Testis (tissue), 5 donors: ENCODE measurements at regions of chr9 and their contacts with region 1.

Region 1: DNA sequence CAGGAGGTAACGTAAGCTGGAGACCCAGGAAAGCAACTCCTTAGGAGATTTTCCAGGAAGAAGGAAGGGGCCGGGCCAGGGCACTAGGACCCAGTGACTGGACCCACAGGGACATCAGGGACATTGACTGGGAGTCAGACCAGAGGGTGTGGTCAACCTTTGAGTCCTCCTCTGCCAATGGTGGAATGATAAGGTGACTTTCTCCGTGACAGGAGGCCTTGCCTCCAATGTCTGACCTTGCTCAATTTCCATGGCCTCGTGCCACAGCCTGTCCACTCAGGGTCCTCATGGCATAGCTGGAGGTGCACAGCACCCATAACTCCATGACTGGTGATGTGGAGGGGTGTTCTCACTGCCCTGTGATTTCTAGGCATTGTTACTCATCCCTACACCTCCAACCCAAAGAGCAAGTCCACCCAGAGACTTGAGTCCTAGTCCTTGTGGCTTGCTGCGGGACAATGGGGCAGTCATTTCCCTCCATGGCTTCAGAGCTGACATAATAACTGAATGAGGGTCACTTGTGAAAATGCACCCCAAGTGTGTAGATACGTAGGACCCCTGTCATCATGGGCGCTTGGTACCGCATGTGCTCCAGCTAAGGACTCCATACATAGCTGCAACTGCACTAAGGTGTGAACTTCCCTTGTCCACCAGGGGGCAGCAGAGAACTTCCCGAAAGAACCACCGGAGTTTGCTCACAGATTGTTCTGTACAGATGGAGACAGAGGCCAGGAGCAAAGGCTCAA is 4.1 kb upstream of the AMBP start:
- DNase-seq: peak; percentile 97
- H3K4me3 ChIP-seq: no peak overlapping the region
- H3K27ac ChIP-seq: no peak overlapping the region
- H3K4me1 ChIP-seq: no peaks in the 10 kb centered on the region
- H3K27me3 ChIP-seq: no peaks in the 10 kb centered on the region
- CTCF ChIP-seq: peak; percentile 92 to 97 (median 94)
- POLR2A ChIP-seq: no peak

Region 2: GRCh38 chr9:114282926-114283325 is 200.7 kb after region 1 on chr9:
- intact Hi-C with region 1: loop called (anchors 10 kb)
- DNase-seq: no peak
- H3K4me3 ChIP-seq: no peak overlapping the region
- H3K27ac ChIP-seq: no peak overlapping the region
- H3K4me1 ChIP-seq: peaks cover 14% of the 10 kb centered on the region
- H3K27me3 ChIP-seq: no peaks in the 10 kb centered on the region
- CTCF ChIP-seq: no peak
- POLR2A ChIP-seq: no peak